Activated CD4-positive, alpha-beta T cell treated with anti-CD3 and anti-CD28 coated beads, Interleukin-2, amount 10 ng/mL, durations not matched to agents 24 days and 14 days (primary cell): ENCODE measurements at regions of chr16 and their contacts with region 1.

Region 1: GRCh38 chr16:15765880-15766279 is 90.9 kb downstream of the MYH11 start:
- DNase-seq: peak; percentile 84
- H3K4me3 Mint-ChIP-seq: no peak overlapping the region
- H3K27ac Mint-ChIP-seq: no peak overlapping the region
- H3K4me1 Mint-ChIP-seq: peaks cover 2% of the 10 kb centered on the region
- H3K27me3 Mint-ChIP-seq: peaks cover 4% of the 10 kb centered on the region

Region 2: DNA sequence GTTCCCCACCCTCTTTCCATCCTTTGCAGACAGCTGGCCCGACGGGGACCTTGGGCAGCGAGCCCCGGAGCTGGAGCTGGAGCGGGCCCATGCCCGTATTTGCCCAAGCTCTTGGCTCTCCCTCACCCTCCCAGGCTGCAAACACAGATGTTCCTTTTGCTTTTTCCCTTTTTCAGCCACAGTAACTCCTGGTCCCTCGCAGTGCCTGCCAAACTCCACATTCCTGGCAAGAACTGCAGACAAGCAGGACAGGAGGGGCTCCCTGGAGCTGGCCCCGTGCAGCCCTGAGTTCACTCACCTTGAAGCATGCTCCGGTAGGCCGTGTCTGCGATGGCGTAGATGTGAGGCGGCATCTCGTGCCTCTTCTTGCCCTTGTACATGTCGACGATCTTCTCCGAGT is 57.1 kb after region 1 on chr16:
- intact Hi-C with region 1: loop called (anchors 5 kb)
- DNase-seq: no peak
- H3K4me3 Mint-ChIP-seq: no peak overlapping the region
- H3K27ac Mint-ChIP-seq: no peak overlapping the region
- H3K4me1 Mint-ChIP-seq: no peaks in the 10 kb centered on the region
- H3K27me3 Mint-ChIP-seq: peaks cover 2% of the 10 kb centered on the region

Region 3: DNA sequence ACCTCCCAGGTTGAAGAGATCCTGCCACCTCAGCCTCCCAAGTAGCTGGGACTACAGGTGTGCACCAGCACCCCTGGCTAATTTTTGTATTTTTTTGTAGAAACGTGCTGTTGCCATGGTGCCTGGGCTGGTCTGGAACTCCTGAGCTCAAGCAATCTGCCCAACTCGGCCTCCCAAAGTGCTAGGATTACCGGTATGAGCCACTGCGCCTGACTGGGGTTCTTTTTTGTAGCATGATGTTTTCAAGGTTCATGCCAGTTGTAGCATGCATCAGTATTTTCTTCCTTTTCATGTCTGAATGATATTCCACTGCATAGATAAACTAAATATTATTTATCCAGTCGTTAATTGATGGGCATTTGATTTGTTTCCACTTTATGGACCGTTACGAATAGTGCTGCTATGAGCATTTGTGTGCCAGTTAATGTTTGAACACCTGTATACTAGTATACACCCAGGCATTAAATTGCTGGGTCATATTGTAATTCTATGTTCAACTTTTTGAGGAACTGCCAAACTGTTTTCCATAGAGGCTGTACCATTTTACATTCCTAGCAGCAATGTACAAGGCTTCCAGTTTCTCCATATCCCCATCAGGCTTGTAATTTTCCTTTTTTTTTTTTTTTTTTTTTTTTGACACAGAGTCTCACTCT is 147.3 kb after region 1 on chr16:
- intact Hi-C with region 1: no loop called
- DNase-seq: no peak
- H3K4me3 Mint-ChIP-seq: peak overlapping the region; percentile 72
- H3K27ac Mint-ChIP-seq: peak overlapping the region; percentile 84
- H3K4me1 Mint-ChIP-seq: peaks cover 10% of the 10 kb centered on the region
- H3K27me3 Mint-ChIP-seq: peaks cover 2% of the 10 kb centered on the region

Region 4: DNA sequence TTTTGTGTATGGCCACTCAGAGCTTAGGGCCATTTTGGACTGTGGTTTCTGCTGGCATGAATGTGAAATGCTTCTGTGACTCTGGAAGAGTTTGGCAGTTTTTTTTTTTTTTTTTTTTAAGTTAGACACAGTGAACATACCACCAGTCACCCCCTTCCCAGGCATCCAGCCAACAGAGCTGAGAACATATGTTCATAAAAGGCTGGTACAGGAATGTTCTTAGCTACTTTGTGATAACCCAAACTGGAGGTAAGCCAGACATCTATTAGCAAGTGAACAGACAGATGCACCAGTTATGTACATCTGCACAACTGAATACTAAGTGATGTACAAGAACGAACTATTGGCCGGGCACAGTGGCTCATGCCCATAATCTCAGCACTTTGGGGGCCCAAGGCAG is 276.2 kb after region 1 on chr16:
- intact Hi-C with region 1: no loop called
- DNase-seq: no peak
- H3K4me3 Mint-ChIP-seq: no peak overlapping the region
- H3K27ac Mint-ChIP-seq: no peak overlapping the region
- H3K4me1 Mint-ChIP-seq: peaks cover 27% of the 10 kb centered on the region
- H3K27me3 Mint-ChIP-seq: no peaks in the 10 kb centered on the region

Region 5: DNA sequence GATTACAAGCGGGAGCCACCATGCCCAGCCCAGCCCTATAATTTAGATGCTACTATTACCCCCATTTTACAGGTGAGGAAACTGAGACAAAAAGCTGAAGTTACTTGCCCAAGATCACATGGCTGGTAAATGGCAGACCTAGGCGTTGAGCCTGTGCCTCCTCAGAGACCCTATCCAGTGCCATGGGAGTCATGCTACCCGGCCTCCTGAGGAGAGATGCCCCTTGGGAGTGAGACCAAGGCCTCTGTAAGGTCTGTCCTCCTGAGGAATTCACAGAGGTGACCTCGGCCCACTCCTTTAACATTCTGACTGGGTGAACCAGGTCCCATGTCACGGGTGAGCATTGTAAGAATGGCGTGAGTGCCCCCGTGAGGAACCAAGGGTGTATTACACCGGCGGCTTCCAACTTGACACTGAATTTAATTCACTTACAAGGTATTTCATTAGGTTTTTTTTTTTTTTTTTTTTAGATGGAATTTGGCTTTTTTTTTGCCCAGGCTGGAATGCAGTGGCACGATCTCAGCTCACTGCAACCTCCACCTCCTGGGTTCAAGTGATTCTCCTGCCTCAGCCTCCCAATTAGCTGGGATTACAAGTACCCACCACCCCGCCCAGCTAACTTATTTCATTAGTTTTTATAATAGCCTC is 361.7 kb after region 1 on chr16:
- intact Hi-C with region 1: loop called (anchors 5 kb)
- DNase-seq: peak; percentile 91
- H3K4me3 Mint-ChIP-seq: no peak overlapping the region
- H3K27ac Mint-ChIP-seq: peak overlapping the region; percentile 67
- H3K4me1 Mint-ChIP-seq: peaks cover 4% of the 10 kb centered on the region
- H3K27me3 Mint-ChIP-seq: no peaks in the 10 kb centered on the region

Region 6: DNA sequence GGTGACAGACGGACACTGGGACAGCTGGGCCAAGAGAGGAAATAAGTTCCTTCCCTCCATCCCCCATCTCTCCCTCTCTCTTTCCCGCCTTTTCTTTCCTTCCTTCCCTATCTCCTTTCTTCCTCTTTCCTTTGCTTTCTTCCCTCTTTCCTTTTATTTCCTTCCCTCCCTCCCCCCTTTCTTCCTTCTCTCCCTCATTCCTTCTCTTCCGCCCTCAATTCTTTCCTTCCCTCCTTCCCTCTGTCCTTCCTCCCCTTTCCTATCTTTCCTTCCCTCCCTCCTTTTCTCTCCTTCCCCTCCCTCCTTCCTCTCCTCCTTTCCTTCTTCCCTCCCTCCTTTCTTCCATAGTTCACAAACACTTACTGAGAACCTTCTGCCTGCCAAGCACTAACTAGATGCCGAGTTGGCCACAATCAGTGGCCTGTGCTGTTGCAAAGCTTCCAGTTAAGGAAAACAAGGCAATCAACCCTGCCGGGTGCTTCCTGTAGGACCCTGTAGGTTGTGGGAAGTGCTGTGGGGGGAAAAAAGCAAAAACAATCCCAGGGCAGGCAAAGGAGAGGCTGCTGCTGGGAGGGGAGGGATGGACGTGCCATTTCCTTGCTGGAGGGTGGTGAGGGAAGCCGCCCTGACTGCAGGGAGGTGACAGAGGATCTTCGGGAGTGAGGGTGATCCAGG is 425.8 kb after region 1 on chr16:
- intact Hi-C with region 1: loop called (anchors 2 kb)
- DNase-seq: no peak
- H3K4me3 Mint-ChIP-seq: no peak overlapping the region
- H3K27ac Mint-ChIP-seq: no peak overlapping the region
- H3K4me1 Mint-ChIP-seq: peaks cover 1% of the 10 kb centered on the region
- H3K27me3 Mint-ChIP-seq: peaks cover 3% of the 10 kb centered on the region